WTC11 (cell line): ENCODE measurements at regions of chr20 and their contacts with region 1.

Region 1: GRCh38 chr20:62550087-62550632 is 74.4 kb upstream of the GATA5 start:
- DNase-seq: no peak
- ATAC-seq: peak; percentile 10
- H3K4me3 Mint-ChIP-seq: peak overlapping the region; percentile 62
- H3K27ac Mint-ChIP-seq: no peak overlapping the region
- H3K4me1 Mint-ChIP-seq: peaks cover 9% of the 10 kb centered on the region; the same call in 1 of the 2 replicates
- H3K27me3 Mint-ChIP-seq: peaks cover 20% of the 10 kb centered on the region
- CTCF ChIP-seq: no peak

Region 2: GRCh38 chr20:62445553-62446340 is 104.4 kb before region 1 on chr20:
- CTCF ChIA-PET with region 1: no interaction called
- POLR2A ChIA-PET with region 1: no interaction called
- DNase-seq: no peak
- ATAC-seq: no peak
- H3K4me3 Mint-ChIP-seq: no peak overlapping the region
- H3K27ac Mint-ChIP-seq: no peak overlapping the region
- H3K4me1 Mint-ChIP-seq: no peaks in the 10 kb centered on the region
- H3K27me3 Mint-ChIP-seq: no peaks in the 10 kb centered on the region
- CTCF ChIP-seq: no peak

Region 3: DNA sequence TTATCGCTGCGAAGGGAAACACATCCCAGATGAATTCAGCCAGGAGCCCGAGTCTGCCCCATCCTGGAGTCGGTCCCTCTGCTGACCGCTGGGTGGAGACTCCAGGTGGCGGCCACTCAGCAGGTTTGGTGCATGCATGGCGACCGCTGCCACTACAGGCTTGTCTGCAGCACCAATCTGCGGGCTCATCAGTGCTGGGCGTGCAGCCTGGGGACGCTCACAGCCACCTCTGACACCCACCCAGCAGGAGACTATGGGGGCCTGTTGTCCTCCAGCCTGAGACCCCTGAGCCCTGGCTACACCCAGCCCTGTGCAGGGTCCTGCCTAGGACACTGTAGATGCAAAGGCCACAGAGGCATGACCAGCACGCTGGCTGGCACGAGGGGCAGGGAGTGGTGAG is 33.8 kb before region 1 on chr20:
- CTCF ChIA-PET with region 1: interaction called, 11 read pairs
- POLR2A ChIA-PET with region 1: no interaction called
- DNase-seq: peak; percentile 41
- ATAC-seq: peak; percentile 60; the same call in 1 of the 2 replicates
- H3K4me3 Mint-ChIP-seq: no peak overlapping the region
- H3K27ac Mint-ChIP-seq: no peak overlapping the region
- H3K4me1 Mint-ChIP-seq: no peaks in the 10 kb centered on the region; the same call in 1 of the 2 replicates
- H3K27me3 Mint-ChIP-seq: no peaks in the 10 kb centered on the region
- CTCF ChIP-seq: no peak

Region 4: GRCh38 chr20:62536871-62537401 is 13.2 kb before region 1 on chr20:
- CTCF ChIA-PET with region 1: interaction called, 34 read pairs
- POLR2A ChIA-PET with region 1: no interaction called
- DNase-seq: no peak
- ATAC-seq: no peak
- H3K4me3 Mint-ChIP-seq: no peak overlapping the region
- H3K27ac Mint-ChIP-seq: no peak overlapping the region
- H3K4me1 Mint-ChIP-seq: no peaks in the 10 kb centered on the region
- H3K27me3 Mint-ChIP-seq: no peaks in the 10 kb centered on the region
- CTCF ChIP-seq: no peak

Region 5: DNA sequence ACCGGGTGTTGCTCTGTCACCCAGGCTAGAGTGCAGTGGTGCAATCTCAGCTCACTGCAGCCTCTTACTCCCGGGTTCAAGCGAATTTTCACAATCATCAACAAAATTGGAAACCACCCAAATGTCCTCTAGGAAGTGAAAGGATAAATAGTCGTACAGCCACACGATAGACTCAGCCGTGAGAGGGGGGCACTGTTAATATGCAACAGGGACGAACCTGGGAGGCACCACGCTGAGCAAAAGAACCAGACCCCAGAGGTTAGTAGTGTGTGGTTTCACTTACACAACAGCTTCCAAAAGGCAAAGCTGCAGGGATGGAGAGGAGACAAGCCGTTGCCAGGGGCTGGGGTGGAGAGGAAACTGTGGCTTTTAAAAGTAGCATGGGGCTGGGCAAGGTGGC is 128.4 kb after region 1 on chr20:
- CTCF ChIA-PET with region 1: no interaction called
- POLR2A ChIA-PET with region 1: no interaction called
- DNase-seq: no peak
- ATAC-seq: no peak
- H3K4me3 Mint-ChIP-seq: no peak overlapping the region
- H3K27ac Mint-ChIP-seq: no peak overlapping the region
- H3K4me1 Mint-ChIP-seq: no peaks in the 10 kb centered on the region
- H3K27me3 Mint-ChIP-seq: peaks cover 4% of the 10 kb centered on the region
- CTCF ChIP-seq: no peak